Ascending aorta (tissue), 2 donors: ENCODE measurements at regions of chr20 and their contacts with region 1.

Region 1: DNA sequence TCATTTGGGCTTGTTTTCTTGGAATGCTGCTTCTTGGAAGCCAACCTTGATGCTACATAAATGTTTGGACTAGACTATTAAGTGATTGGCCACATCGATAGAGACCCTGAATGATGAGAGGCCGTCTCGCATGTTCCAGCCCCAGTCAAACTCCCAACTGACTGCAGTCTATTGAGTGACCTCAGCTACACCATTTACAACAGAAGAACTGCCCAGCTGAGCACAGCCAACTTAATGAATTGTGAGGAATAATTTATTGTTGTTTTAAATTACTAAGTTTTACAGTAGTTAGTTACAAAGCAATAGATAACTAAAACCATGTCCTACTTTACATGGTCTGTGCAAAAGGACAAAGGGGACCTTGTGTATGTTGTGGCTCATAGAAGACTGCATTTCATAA is 63.0 kb downstream of the PLCB4 start:
- DNase-seq: no peak
- H3K4me3 ChIP-seq: no peak overlapping the region
- H3K27ac ChIP-seq: no peak overlapping the region
- H3K4me1 ChIP-seq: no peaks in the 10 kb centered on the region
- H3K27me3 ChIP-seq: no peaks in the 10 kb centered on the region
- CTCF ChIP-seq: no peak

Region 2: GRCh38 chr20:9119776-9120175 is 12.1 kb before region 1 on chr20:
- intact Hi-C with region 1: no loop called
- DNase-seq: no peak
- H3K4me3 ChIP-seq: no peak overlapping the region
- H3K27ac ChIP-seq: no peak overlapping the region
- H3K4me1 ChIP-seq: no peaks in the 10 kb centered on the region
- H3K27me3 ChIP-seq: no peaks in the 10 kb centered on the region
- CTCF ChIP-seq: no peak

Region 3: GRCh38 chr20:9147547-9148024 is 15.7 kb after region 1 on chr20:
- intact Hi-C with region 1: loop called (anchors 2 kb)
- DNase-seq: no peak
- H3K4me3 ChIP-seq: no peak overlapping the region
- H3K27ac ChIP-seq: no peak overlapping the region
- H3K4me1 ChIP-seq: no peaks in the 10 kb centered on the region
- H3K27me3 ChIP-seq: no peaks in the 10 kb centered on the region
- CTCF ChIP-seq: no peak

Region 4: GRCh38 chr20:9392892-9393857 is 261.3 kb after region 1 on chr20:
- intact Hi-C with region 1: no loop called
- DNase-seq: peak; percentile 32 to 81
- H3K4me3 ChIP-seq: no peak overlapping the region
- H3K27ac ChIP-seq: no peak overlapping the region
- H3K4me1 ChIP-seq: peaks cover 0 to 16% of the 10 kb centered on the region in 2 donors
- H3K27me3 ChIP-seq: no peaks in the 10 kb centered on the region
- CTCF ChIP-seq: peak; percentile 53 to 80 (median 60)